ENCODE measurements at regions of chr4 and their contacts with region 1.

Region 1: GRCh38 chr4:150004481-150004880 is 73.8 kb upstream of the DCLK2 start:
- DNase-seq: no peak
- H3K4me3 ChIP-seq: no peak overlapping the region
- H3K27ac ChIP-seq: no peak overlapping the region
- H3K4me1 ChIP-seq: peaks cover 0 to 7% (median 0%) of the 10 kb centered on the region in 4 experiments
- H3K27me3 ChIP-seq: peaks cover 0 to 2% (median 0%) of the 10 kb centered on the region in 5 experiments

Region 2: DNA sequence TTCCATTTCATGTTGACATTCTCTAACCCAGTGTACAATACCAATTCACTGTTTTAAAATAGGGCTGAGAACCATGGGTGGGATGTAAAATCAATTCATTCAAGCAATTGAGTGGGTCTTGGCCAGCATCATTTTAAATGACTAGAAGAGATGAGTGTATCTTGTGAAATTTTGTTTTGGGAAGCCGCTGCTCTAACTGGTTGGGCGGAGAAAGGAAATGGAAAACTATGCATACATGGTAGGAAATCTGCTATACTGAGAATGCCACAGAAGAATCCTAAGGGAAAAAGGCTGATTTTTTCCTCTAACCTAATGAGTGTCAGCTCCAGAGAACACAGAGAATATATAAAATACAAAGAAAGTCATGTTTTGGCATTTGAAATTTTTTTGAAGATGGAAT is 19.0 kb after region 1 on chr4:
- CTCF ChIA-PET with region 1: no interaction called
- POLR2A ChIA-PET with region 1: no interaction called
- DNase-seq: no peak
- H3K4me3 ChIP-seq: no peak overlapping the region
- H3K27ac ChIP-seq: no peak overlapping the region
- H3K4me1 ChIP-seq: no peaks in the 10 kb centered on the region
- H3K27me3 ChIP-seq: no peaks in the 10 kb centered on the region

Region 3: DNA sequence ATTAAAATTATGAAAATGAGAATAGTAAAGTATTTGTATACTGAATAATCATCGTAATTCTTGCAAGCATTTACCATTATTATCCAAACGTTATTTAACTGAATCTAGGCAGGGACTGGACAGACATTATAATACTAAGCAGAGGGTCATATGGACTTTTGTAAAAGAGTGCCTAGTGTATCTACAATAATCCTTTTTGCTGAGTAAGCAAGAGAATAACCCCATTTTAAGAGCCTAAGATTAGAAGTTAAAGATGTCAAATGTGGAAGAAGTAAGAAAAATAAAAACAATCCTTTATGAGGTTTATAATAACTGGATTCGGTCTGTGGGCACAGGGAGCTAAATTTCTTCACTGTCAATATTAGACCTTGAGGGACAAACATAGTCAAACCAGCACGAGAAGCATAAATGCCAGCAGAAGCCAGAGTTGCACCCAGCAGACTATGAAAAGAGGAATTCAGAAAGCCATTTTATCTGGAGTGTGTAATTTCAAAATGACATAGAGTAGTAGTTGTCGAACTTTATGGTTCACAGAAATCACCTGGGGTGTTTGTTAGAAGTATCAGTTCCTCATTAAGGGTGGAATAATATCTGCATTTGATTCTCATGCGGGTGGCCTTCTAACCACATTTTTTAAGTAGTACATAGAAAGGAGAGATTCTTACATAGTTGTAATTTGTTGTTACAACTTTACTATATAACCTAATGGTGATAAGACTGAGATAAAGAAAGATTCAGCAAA is 34.0 kb after region 1 on chr4:
- CTCF ChIA-PET with region 1: no interaction called
- POLR2A ChIA-PET with region 1: no interaction called
- DNase-seq: peak in 1 of 3 donors; percentile 10
- H3K4me3 ChIP-seq: no peak overlapping the region
- H3K27ac ChIP-seq: no peak overlapping the region
- H3K4me1 ChIP-seq: no peaks in the 10 kb centered on the region
- H3K27me3 ChIP-seq: no peaks in the 10 kb centered on the region

Region 4: GRCh38 chr4:150209140-150209829 is 204.8 kb after region 1 on chr4:
- CTCF ChIA-PET with region 1: interaction called, 38 read pairs
- POLR2A ChIA-PET with region 1: no interaction called
- DNase-seq: peak; percentile 63 to 79 (median 72)
- H3K4me3 ChIP-seq: no peak overlapping the region
- H3K27ac ChIP-seq: no peak overlapping the region
- H3K4me1 ChIP-seq: peaks cover 0 to 5% (median 0%) of the 10 kb centered on the region in 4 experiments
- H3K27me3 ChIP-seq: no peaks in the 10 kb centered on the region

Measured in common myeloid progenitor, CD34-positive (primary cell).